Natural killer cell (primary cell): ENCODE measurements at regions of chr9 and their contacts with region 1.

Region 1: DNA sequence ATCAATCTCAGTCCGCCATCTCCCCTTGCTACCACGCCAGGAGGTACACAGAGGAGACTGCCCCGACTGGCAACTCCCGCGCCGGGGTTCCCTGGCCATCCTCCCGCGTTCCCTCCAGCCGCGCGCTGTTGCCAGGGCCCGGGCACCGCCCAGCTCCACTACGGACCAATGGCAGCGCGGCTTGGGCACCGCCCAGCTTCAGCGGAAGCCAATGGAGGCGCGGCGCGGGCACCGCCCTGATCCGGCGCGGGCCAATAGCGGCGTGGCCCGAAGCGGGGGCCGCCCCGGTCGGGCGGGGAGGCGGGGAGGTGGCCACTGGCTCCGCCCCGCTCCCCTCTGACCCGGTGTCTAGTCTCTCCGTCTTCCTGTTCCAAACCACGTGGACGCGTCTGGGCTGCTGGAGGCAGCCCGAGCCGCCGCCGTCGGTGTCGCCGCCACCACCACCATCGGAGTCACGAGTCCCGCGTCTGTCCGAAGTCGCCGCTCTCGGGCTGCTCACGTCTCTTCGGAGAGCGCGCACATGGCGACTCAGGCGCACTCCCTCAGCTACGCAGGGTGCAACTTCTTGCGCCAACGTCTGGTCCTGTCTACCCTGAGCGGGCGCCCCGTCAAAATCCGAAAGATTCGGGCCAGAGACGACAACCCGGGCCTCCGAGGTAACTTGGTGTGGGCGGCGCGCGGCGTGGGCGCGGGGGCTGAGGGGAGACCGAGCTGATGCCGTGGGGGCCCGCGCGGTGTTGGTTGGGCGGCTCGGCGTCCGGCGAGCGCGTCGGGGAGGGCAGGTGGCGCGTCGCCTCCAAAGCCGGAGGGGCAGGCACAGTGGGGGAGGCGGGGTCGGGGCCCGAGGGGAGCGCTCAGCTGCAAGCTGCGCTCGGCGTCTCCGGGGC is at the start of gene RCL1:
- DNase-seq: peak; percentile 97 to 98
- ATAC-seq: peak; percentile 92 to 99 (median 92)
- H3K4me3 ChIP-seq: peak within 1 kb of the TSS; percentile 81
- H3K4me3 Mint-ChIP-seq: peak within 1 kb of the TSS; percentile 94
- H3K27ac ChIP-seq: peak within 1 kb of the TSS; percentile 81
- H3K27ac Mint-ChIP-seq: peak within 1 kb of the TSS; percentile 89
- H3K4me1 ChIP-seq: peaks cover 21% of the 10 kb centered on the region
- H3K4me1 Mint-ChIP-seq: peaks cover 29 to 31% of the 10 kb centered on the region in 2 donors
- H3K27me3 ChIP-seq: no peaks in the 10 kb centered on the region
- H3K27me3 Mint-ChIP-seq: peaks cover 5 to 27% of the 10 kb centered on the region in 2 donors
- CTCF ChIP-seq: no peak
- total RNA-seq, gene RCL1: 18.1 to 26.3 (median 23.0) TPM

Region 2: GRCh38 chr9:4662108-4662988 is 130.5 kb before region 1 on chr9 and contains the start of gene PLPP6:
- intact Hi-C with region 1: no loop called
- DNase-seq: peak; percentile 66 to 92
- ATAC-seq: peak; percentile 78 to 89 (median 87)
- H3K4me3 ChIP-seq: peak within 1 kb of the TSS; percentile 57
- H3K4me3 Mint-ChIP-seq: peak within 1 kb of the TSS; percentile 98
- H3K27ac ChIP-seq: peak within 1 kb of the TSS; percentile 80
- H3K27ac Mint-ChIP-seq: peak within 1 kb of the TSS; percentile 88 to 91
- H3K4me1 ChIP-seq: peaks cover 22% of the 10 kb centered on the region
- H3K4me1 Mint-ChIP-seq: peaks cover 54 to 60% of the 10 kb centered on the region in 2 donors
- H3K27me3 ChIP-seq: no peaks in the 10 kb centered on the region
- H3K27me3 Mint-ChIP-seq: peaks cover 0 to 5% of the 10 kb centered on the region in 2 donors
- CTCF ChIP-seq: peak; percentile 53
- total RNA-seq, gene PLPP6: 3.7 to 5.6 (median 3.8) TPM

Region 3: GRCh38 chr9:4679268-4680172 is 113.3 kb before region 1 on chr9 and contains the start of gene CDC37L1:
- intact Hi-C with region 1: loop called (anchors 2 kb)
- DNase-seq: peak; percentile 98 to 100
- ATAC-seq: peak; percentile 93 to 99 (median 97)
- H3K4me3 ChIP-seq: peak within 1 kb of the TSS; percentile 85
- H3K4me3 Mint-ChIP-seq: no peak within 1 kb of the TSS
- H3K27ac ChIP-seq: peak within 1 kb of the TSS; percentile 94
- H3K27ac Mint-ChIP-seq: no peak within 1 kb of the TSS
- H3K4me1 ChIP-seq: peaks cover 8% of the 10 kb centered on the region
- H3K4me1 Mint-ChIP-seq: peaks cover 11% of the 10 kb centered on the region in 2 donors
- H3K27me3 ChIP-seq: no peaks in the 10 kb centered on the region
- H3K27me3 Mint-ChIP-seq: peaks cover 0 to 5% of the 10 kb centered on the region in 2 donors
- CTCF ChIP-seq: peak; percentile 67
- total RNA-seq, gene CDC37L1: 11.6 to 20.1 (median 13.0) TPM

Region 4: GRCh38 chr9:4740638-4741364 is 52.0 kb before region 1 on chr9 and contains the start of gene AK3:
- intact Hi-C with region 1: loop called (anchors 1 kb)
- DNase-seq: peak; percentile 88 to 91
- ATAC-seq: peak; percentile 91 to 98 (median 94)
- H3K4me3 ChIP-seq: peak within 1 kb of the TSS; percentile 94
- H3K4me3 Mint-ChIP-seq: peak within 1 kb of the TSS; percentile 93
- H3K27ac ChIP-seq: peak within 1 kb of the TSS; percentile 72
- H3K27ac Mint-ChIP-seq: peak within 1 kb of the TSS; percentile 90 to 91
- H3K4me1 ChIP-seq: peaks cover 20% of the 10 kb centered on the region
- H3K4me1 Mint-ChIP-seq: peaks cover 30 to 33% of the 10 kb centered on the region in 2 donors
- H3K27me3 ChIP-seq: no peaks in the 10 kb centered on the region
- H3K27me3 Mint-ChIP-seq: no peaks in the 10 kb centered on the region
- CTCF ChIP-seq: no peak
- total RNA-seq, gene AK3: 18.6 to 23.1 (median 21.0) TPM

Region 5: DNA sequence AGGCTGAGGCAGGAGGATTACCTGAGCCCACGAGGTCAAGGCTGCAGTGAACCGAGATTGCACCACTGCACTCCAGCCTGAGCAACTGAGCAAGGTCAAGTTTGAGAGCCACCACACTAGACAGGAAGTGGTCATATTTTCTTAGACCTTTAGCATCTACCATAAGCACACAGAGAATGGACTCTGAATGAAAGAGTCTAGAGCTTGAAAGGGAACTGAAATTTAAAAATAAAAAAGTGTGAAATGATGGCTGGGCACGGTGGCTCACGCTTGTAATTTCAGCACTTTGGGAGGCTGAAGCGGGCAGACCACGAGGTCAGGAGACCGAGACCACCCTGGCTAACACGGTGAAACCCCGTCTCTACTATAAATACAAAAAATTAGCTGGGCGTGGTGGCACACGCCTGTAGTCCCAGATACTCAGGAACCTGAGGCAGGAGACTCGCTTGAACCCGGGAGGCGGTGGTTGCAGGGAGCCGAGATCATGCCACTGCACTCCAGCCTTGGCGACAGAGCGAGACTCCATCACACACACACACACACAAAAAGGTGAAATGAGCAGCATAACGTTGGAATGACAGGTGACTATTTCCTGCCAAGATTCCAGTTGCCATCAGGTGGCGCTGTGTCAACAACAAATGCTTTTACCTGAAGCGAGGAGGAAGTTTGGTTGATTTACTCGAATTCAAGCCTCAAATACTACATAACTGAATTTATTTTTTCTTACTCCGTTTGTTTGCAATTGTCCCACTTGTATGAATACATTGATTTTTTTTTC is 30.5 kb before region 1 on chr9:
- intact Hi-C with region 1: loop called (anchors 2 kb)
- DNase-seq: peak; percentile 62 to 91
- ATAC-seq: peak; percentile 62 to 79 (median 69)
- H3K4me3 ChIP-seq: no peak overlapping the region
- H3K4me3 Mint-ChIP-seq: peak overlapping the region; percentile 64
- H3K27ac ChIP-seq: no peak overlapping the region
- H3K27ac Mint-ChIP-seq: no peak overlapping the region
- H3K4me1 ChIP-seq: peaks cover 22% of the 10 kb centered on the region
- H3K4me1 Mint-ChIP-seq: peaks cover 7 to 15% of the 10 kb centered on the region in 2 donors
- H3K27me3 ChIP-seq: no peaks in the 10 kb centered on the region
- H3K27me3 Mint-ChIP-seq: peaks cover 0 to 10% of the 10 kb centered on the region in 2 donors
- CTCF ChIP-seq: peak; percentile 90

Region 6: DNA sequence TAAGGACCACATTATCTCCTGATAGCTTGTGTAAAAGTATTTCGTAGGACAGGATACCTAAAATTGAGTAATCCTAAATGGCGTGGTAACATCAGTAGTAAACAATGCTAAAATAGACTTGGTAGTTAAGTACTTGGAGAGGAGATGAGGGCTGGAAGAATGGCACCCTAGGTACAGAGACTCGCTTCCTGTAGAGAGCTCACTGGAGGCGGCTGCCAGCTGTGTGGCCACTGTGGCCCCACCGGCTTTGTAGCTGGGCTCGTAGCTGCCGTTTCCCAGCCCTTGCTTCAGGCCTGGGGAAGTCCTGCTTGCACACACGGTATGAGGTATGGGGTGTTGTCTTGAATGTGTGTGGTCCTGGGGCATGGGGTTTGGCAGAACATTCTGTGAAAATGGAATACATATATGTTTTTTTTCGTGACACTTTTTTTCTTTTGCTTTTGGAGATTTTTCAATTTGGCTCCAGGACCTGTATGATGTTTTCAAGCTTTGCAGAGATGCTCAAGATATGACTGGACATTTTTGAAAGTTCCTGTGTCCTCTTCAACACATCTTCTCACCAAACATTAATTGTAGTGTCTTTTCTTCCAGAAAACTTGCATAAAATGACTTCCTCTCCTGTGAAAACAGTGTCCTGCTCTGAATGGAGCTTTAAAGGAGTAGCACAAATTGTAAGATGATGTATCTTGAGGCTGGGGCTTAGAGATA is 57.9 kb after region 1 on chr9:
- intact Hi-C with region 1: loop called (anchors 5 kb)
- DNase-seq: peak in 1 of 2 donors; percentile 29
- ATAC-seq: peak; percentile 65 to 78 (median 75)
- H3K4me3 ChIP-seq: no peak overlapping the region
- H3K4me3 Mint-ChIP-seq: peak overlapping the region; percentile 82
- H3K27ac ChIP-seq: peak overlapping the region; percentile 2
- H3K27ac Mint-ChIP-seq: peak overlapping the region in 1 of 2 donors; percentile 61
- H3K4me1 ChIP-seq: peaks cover 16% of the 10 kb centered on the region
- H3K4me1 Mint-ChIP-seq: peaks cover 14 to 26% of the 10 kb centered on the region in 2 donors
- H3K27me3 ChIP-seq: no peaks in the 10 kb centered on the region
- H3K27me3 Mint-ChIP-seq: no peaks in the 10 kb centered on the region
- CTCF ChIP-seq: no peak

Region 7: GRCh38 chr9:5628530-5629311 is 835.9 kb after region 1 on chr9 and contains the start of gene RIC1:
- intact Hi-C with region 1: loop called (anchors 5 kb)
- DNase-seq: peak; percentile 89 to 94
- ATAC-seq: peak; percentile 87 to 97 (median 88)
- H3K4me3 ChIP-seq: peak within 1 kb of the TSS; percentile 99
- H3K4me3 Mint-ChIP-seq: peak within 1 kb of the TSS; percentile 99
- H3K27ac ChIP-seq: peak within 1 kb of the TSS; percentile 92
- H3K27ac Mint-ChIP-seq: peak within 1 kb of the TSS; percentile 93
- H3K4me1 ChIP-seq: peaks cover 27% of the 10 kb centered on the region
- H3K4me1 Mint-ChIP-seq: peaks cover 49 to 57% of the 10 kb centered on the region in 2 donors
- H3K27me3 ChIP-seq: no peaks in the 10 kb centered on the region
- H3K27me3 Mint-ChIP-seq: no peaks in the 10 kb centered on the region
- CTCF ChIP-seq: no peak
- total RNA-seq, gene RIC1: 23.5 to 33.9 (median 31.8) TPM